GM12878 (cell line): ENCODE measurements at regions of chr3 and their contacts with region 1.

Region 1: GRCh38 chr3:141441381-141442364 is 45.2 kb upstream of the RASA2 start:
- DNase-seq: peak; percentile 84
- ATAC-seq: peak; percentile 99
- H3K4me3 ChIP-seq: no peak overlapping the region
- H3K27ac ChIP-seq: peak overlapping the region; percentile 73
- H3K4me1 ChIP-seq: peaks cover 31% of the 10 kb centered on the region
- H3K27me3 ChIP-seq: no peaks in the 10 kb centered on the region
- CTCF ChIP-seq: peak; percentile 94 to 96 (median 95)
- EP300 ChIP-seq: no peak
- POLR2A ChIP-seq: no peak
- RAD21 ChIP-seq: peak; percentile 86

Region 2: GRCh38 chr3:141336672-141337522 is 104.8 kb before region 1 on chr3:
- CTCF ChIA-PET with region 1: interaction called, 5 read pairs
- POLR2A ChIA-PET with region 1: interaction called, 3 read pairs
- RAD21 ChIA-PET with region 1: interaction called, 19 read pairs
- SMC1A ChIA-PET with region 1: interaction called, 8 read pairs
- in situ Hi-C with region 1: no loop called
- intact Hi-C with region 1: no loop called
- DNase-seq: peak; percentile 95
- ATAC-seq: peak; percentile 90
- H3K4me3 ChIP-seq: peak overlapping the region; percentile 33
- H3K27ac ChIP-seq: peak overlapping the region; percentile 95
- H3K4me1 ChIP-seq: peaks cover 45% of the 10 kb centered on the region
- H3K27me3 ChIP-seq: no peaks in the 10 kb centered on the region
- CTCF ChIP-seq: no peak
- EP300 ChIP-seq: peak; percentile 27 to 98; a peak in 3 of 4 replicates
- POLR2A ChIP-seq: no peak
- RAD21 ChIP-seq: 0 out of 2 replicates have a peak, but pooled peaks have one; percentile 12

Region 3: GRCh38 chr3:141379250-141379966 is 62.3 kb before region 1 on chr3:
- CTCF ChIA-PET with region 1: interaction called, 40 read pairs
- POLR2A ChIA-PET with region 1: interaction called, 4 read pairs
- RAD21 ChIA-PET with region 1: interaction called, 40 read pairs
- SMC1A ChIA-PET with region 1: interaction called, 84 read pairs
- in situ Hi-C with region 1: no loop called
- intact Hi-C with region 1: no loop called
- DNase-seq: peak; percentile 95
- ATAC-seq: peak; percentile 62
- H3K4me3 ChIP-seq: peak overlapping the region; percentile 41; the same call in 1 of the 2 replicates
- H3K27ac ChIP-seq: peak overlapping the region; percentile 94
- H3K4me1 ChIP-seq: peaks cover 81% of the 10 kb centered on the region
- H3K27me3 ChIP-seq: no peaks in the 10 kb centered on the region
- CTCF ChIP-seq: no peak
- EP300 ChIP-seq: peak; percentile 93 to 98
- POLR2A ChIP-seq: peak; percentile 68
- RAD21 ChIP-seq: peak; percentile 21; the same call in 1 of the 2 replicates

Region 4: DNA sequence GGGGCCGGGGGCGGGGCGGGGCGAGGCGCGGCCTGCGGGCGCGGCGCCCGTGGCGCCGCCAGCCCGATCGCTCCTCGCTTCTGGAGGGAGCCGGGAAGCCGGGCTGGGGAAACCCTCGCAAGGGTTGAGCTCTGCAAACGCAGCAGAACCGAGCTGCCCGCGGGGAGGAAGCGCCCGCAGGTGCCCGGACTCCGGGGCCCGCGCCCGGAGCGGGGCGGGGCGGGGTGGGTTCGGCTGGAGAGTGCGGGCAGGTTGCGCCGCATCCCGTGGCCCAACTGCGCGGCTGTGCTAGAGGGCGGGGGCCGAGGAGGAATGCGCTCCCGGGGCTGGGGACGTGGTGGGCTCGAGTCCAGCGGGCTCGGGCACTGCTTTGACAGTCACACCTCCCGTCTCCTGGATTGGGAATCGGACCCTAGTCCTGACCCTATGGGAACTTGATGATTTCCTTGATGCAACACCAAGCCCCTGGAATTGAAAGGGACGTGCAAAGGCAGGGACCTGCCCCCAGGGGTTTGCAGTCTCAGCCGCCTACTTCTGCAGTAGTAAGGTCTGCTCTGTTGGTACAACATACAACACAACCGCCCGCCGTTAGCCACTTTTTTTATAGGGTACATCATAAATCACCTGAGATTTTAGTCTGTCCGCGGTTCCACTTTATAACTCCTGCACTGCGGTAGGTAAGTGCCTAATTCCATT is 39.0 kb before region 1 on chr3:
- CTCF ChIA-PET with region 1: interaction called, 19 read pairs
- POLR2A ChIA-PET with region 1: interaction called, 4 read pairs
- RAD21 ChIA-PET with region 1: interaction called, 22 read pairs
- SMC1A ChIA-PET with region 1: interaction called, 57 read pairs
- in situ Hi-C with region 1: no loop called
- intact Hi-C with region 1: loop called (anchors 5 kb)
- DNase-seq: no peak
- ATAC-seq: peak; percentile 61
- H3K4me3 ChIP-seq: peak overlapping the region; percentile 72
- H3K27ac ChIP-seq: peak overlapping the region; percentile 92
- H3K4me1 ChIP-seq: peaks cover 29% of the 10 kb centered on the region
- H3K27me3 ChIP-seq: no peaks in the 10 kb centered on the region
- CTCF ChIP-seq: no peak
- EP300 ChIP-seq: no peak
- POLR2A ChIP-seq: peak; percentile 63
- RAD21 ChIP-seq: no peak

Region 5: GRCh38 chr3:141419921-141420320 is 21.8 kb before region 1 on chr3:
- CTCF ChIA-PET with region 1: interaction called, 34 read pairs
- POLR2A ChIA-PET with region 1: interaction called, 4 read pairs
- RAD21 ChIA-PET with region 1: interaction called, 19 read pairs
- SMC1A ChIA-PET with region 1: interaction called, 38 read pairs
- in situ Hi-C with region 1: no loop called
- intact Hi-C with region 1: no loop called
- DNase-seq: no peak
- ATAC-seq: no peak
- H3K4me3 ChIP-seq: no peak overlapping the region
- H3K27ac ChIP-seq: no peak overlapping the region
- H3K4me1 ChIP-seq: no peaks in the 10 kb centered on the region
- H3K27me3 ChIP-seq: no peaks in the 10 kb centered on the region
- CTCF ChIP-seq: no peak
- EP300 ChIP-seq: no peak
- POLR2A ChIP-seq: no peak
- RAD21 ChIP-seq: no peak

Region 6: DNA sequence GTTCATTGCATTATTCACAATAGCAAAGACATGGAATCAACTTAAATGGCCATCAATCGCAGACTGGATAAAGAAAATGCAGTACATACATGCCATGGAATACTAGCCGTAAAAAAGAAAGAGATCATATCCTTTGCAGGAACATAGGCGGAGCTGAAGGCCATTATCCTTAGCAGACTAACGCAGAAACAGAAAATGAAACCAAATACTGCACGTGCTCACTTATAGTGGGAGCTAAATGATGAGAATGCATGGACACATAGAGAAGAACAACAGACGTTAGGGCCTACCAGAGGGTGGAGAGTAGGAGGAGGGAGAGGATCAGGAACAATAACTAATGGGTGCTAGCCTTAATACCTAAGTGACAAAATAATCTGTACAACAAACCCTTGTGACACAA is 103.0 kb after region 1 on chr3:
- CTCF ChIA-PET with region 1: no interaction called
- POLR2A ChIA-PET with region 1: no interaction called
- RAD21 ChIA-PET with region 1: no interaction called
- SMC1A ChIA-PET with region 1: no interaction called
- in situ Hi-C with region 1: no loop called
- intact Hi-C with region 1: no loop called
- DNase-seq: no peak
- ATAC-seq: no peak
- H3K4me3 ChIP-seq: no peak overlapping the region
- H3K27ac ChIP-seq: no peak overlapping the region
- H3K4me1 ChIP-seq: no peaks in the 10 kb centered on the region
- H3K27me3 ChIP-seq: no peaks in the 10 kb centered on the region
- CTCF ChIP-seq: no peak
- EP300 ChIP-seq: no peak
- POLR2A ChIP-seq: no peak
- RAD21 ChIP-seq: no peak

Region 7: GRCh38 chr3:141677701-141678100 is 236.0 kb after region 1 on chr3:
- CTCF ChIA-PET with region 1: no interaction called
- POLR2A ChIA-PET with region 1: no interaction called
- RAD21 ChIA-PET with region 1: no interaction called
- SMC1A ChIA-PET with region 1: no interaction called
- in situ Hi-C with region 1: no loop called
- intact Hi-C with region 1: no loop called
- DNase-seq: no peak
- ATAC-seq: no peak
- H3K4me3 ChIP-seq: no peak overlapping the region
- H3K27ac ChIP-seq: no peak overlapping the region
- H3K4me1 ChIP-seq: no peaks in the 10 kb centered on the region
- H3K27me3 ChIP-seq: no peaks in the 10 kb centered on the region
- CTCF ChIP-seq: no peak
- EP300 ChIP-seq: no peak
- POLR2A ChIP-seq: no peak
- RAD21 ChIP-seq: no peak